ENCODE measurements at regions of chr14 and their contacts with region 1.

Region 1: GRCh38 chr14:38873941-38874612 is 229.0 kb downstream of the SEC23A start:
- DNase-seq: no peak

Region 2: GRCh38 chr14:38948171-38948570 is 74.1 kb after region 1 on chr14:
- intact Hi-C with region 1: loop called (anchors 10 kb)
- DNase-seq: peak in 13 of 42 donors; percentile 17 to 76 (median 39)

Region 3: DNA sequence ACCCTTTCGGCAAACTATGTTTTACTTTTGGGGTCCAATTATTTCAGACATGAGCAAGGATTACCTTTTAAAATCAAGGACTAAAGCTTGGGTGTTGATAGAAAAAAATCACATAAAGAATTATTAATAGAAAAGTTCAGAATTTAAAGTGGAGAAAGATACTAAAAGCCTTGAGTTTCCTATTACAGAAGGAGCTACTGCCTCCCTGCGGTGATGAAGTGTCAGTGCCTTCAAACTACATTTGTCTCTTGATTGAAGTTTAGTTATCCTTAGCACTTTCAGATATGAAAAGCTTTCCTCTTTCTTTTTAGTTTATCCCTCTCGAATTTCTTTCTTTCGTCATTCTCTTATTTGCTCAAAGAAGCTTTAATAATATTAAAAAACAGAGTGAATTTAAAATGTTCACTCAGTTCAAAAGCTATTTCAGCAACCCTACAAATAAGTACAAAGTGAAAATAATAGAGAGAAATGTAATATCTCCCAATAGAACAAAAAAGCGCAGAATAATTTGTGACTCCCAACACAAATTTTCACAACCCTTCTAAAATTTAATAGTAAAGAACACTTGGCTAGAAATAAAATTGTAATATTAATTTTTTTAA is 141.4 kb after region 1 on chr14:
- intact Hi-C with region 1: loop called (anchors 10 kb)
- DNase-seq: peak in 38 of 42 donors; percentile 18 to 86 (median 58)